ENCODE measurements at regions of chr7 and their contacts with region 1.

Region 1: DNA sequence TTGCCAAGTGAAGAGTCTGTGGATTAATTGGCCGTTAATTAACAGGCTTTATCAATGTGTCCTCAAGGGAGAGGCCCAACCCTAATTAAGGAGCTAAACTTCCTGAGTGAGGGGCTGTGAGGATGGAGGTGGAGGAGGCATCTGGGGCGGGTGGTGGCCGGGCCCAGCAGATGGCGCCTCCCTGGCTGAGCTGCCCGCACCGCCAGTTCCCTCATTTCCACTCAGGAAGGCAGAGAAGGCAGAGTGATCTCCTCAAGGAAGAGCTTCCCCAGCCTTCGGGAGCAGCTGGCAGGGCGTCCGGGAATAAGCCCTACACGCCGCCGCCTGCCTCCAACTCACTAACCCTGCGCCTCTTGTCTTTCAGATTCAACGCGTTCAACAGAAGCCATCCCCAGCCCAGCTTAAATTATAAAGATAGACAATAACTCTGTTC is 112.2 kb downstream of the CYTH3 start:
- DNase-seq: peak; percentile 6
- H3K4me3 ChIP-seq: no peak overlapping the region
- H3K27ac ChIP-seq: no peak overlapping the region
- H3K4me1 ChIP-seq: no peaks in the 10 kb centered on the region
- H3K27me3 ChIP-seq: no peaks in the 10 kb centered on the region
- CTCF ChIP-seq: peak; percentile 8 to 63

Region 2: DNA sequence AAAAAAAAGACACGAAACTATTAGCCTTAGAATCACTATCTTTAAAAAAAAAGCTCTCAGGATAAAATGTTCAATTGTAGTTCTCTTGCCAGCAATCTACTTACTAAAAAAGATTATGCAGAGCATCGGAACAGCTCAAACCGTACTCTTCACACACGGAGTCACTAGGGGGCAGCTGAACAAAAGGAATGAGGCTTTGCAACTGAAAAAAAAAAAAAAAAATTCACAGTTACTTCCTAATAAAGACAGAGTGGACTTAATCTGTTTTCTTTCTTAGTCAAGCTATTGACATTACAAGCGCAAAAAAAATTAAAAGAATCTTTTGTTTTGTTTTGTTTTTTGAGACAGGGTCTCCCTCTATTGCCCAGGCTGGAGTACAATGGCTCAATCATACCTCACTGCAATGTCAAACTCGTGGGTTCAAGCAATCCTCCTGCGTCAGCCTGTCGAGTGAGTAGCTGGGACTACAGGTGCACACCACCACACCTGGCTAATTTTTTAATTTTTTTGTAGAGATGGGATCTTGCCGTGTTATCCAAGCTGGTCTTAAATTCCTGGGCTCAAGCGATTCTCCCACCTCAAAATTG is 162.9 kb before region 1 on chr7:
- CTCF ChIA-PET with region 1: no interaction called
- dilution Hi-C with region 1: no loop called
- in situ Hi-C with region 1: no loop called
- intact Hi-C with region 1: loop called (anchors 5 kb)
- DNase-seq: peak; percentile 36
- H3K4me3 ChIP-seq: no peak overlapping the region
- H3K27ac ChIP-seq: no peak overlapping the region
- H3K4me1 ChIP-seq: peaks cover 5% of the 10 kb centered on the region
- H3K27me3 ChIP-seq: no peaks in the 10 kb centered on the region
- CTCF ChIP-seq: peak; percentile 36 to 52

Region 3: DNA sequence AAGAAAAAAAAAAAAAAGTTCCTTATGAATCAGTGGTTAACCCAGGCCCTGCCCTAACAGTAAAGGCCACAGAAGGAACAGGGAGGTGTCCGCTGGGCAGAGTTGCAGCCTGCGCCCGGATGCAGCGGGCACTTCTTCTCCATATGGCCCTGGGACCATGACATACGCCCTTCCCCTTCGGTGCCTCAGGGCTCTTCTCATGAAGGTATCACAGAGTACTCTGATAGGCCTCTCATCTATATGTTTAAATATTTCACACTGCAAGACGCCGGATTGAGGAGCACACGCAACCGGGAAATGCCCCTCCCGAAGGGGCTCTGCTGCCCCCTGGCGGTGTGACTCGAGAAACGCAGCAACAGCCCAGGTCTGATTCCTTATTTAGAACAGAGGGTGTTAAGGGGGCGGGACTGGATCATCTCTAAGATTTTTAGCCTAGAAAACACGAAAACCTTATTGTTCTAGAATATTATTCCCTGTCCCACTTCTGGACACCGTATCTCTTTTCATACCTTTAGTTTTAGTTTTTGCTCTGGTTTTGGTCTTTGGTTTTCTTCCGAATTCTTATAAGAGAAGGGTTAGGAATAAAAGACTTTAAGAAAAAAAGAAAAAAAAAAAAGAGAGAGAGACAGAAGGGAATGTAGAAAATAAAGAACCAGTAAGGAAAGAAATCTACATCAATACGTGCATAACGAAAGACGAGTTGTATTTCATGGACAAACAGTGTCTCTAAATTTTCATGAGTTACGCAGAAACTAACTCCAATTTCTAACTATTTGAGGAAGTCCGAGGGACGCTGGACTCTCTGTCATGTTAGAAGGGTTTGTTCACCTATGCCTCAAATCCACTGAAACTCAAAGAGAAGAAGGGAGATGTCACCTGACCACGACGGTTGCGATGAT is 275.5 kb after region 1 on chr7:
- CTCF ChIA-PET with region 1: no interaction called
- dilution Hi-C with region 1: no loop called
- in situ Hi-C with region 1: no loop called
- intact Hi-C with region 1: loop called (anchors 5 kb)
- DNase-seq: peak; percentile 59
- H3K4me3 ChIP-seq: no peak overlapping the region
- H3K27ac ChIP-seq: no peak overlapping the region
- H3K4me1 ChIP-seq: peaks cover 11% of the 10 kb centered on the region
- H3K27me3 ChIP-seq: no peaks in the 10 kb centered on the region
- CTCF ChIP-seq: peak; percentile 94 to 95